ENCODE measurements at regions of chr1 and their contacts with region 1.

Region 1: DNA sequence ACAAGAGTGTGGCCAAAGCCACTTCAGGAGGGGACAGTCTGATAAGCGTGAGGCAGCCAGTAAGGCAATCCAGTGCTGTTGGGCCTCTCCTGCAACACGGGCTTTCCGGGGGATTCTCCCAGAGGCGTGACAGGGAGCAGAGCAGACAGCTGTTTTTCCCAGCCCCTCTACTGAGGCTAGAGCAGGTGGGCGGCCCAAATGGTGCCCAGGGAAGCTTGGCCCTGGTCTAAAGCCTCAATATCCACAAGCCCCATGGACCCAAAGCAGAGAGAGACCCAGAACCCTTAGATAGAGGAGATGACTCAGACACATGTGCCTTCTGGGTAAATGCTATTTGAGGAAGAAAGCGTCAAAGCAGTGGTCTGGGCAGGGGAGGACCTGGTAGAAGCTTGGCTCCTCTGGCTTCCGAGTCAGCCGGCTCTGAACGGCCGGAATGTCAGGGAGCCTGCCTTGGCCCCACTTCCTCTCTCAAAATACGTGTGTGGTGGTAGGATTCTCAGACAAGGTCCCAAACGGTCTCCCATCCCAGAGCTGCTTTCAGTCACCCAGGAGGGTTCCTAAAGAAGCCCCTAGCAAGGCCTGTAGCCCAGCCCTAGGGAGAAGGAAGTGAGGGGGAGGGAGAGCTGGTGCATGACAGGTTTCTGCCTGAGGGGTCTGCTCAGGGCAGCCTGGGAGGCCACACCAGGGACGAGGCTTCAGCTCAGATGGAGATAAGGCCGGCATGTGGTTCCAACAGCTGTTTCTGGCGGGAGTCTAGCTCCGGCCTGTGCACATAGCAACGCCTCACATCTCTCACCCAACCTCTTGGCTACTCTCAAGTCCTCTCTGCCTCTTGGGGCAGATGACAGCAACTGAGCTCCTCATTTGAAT is 28.8 kb downstream of the PIK3C2B start:
- DNase-seq: peak; percentile 44
- H3K4me3 ChIP-seq: no peak overlapping the region
- H3K27ac ChIP-seq: peak overlapping the region; percentile 2
- H3K4me1 ChIP-seq: peaks cover 66% of the 10 kb centered on the region
- H3K27me3 ChIP-seq: no peaks in the 10 kb centered on the region
- CTCF ChIP-seq: no peak
- POLR2A ChIP-seq: no peak

Region 2: GRCh38 chr1:204417231-204417997 is 48.4 kb before region 1 on chr1:
- CTCF ChIA-PET with region 1: no interaction called
- POLR2A ChIA-PET with region 1: no interaction called
- dilution Hi-C with region 1: no loop called
- intact Hi-C with region 1: loop called (anchors 1 kb)
- DNase-seq: peak; percentile 95
- H3K4me3 ChIP-seq: peak overlapping the region in 1 of 3 experiments; percentile 31
- H3K27ac ChIP-seq: peak overlapping the region; percentile 84
- H3K4me1 ChIP-seq: peaks cover 26% of the 10 kb centered on the region
- H3K27me3 ChIP-seq: no peaks in the 10 kb centered on the region
- CTCF ChIP-seq: no peak
- POLR2A ChIP-seq: no peak

Region 3: DNA sequence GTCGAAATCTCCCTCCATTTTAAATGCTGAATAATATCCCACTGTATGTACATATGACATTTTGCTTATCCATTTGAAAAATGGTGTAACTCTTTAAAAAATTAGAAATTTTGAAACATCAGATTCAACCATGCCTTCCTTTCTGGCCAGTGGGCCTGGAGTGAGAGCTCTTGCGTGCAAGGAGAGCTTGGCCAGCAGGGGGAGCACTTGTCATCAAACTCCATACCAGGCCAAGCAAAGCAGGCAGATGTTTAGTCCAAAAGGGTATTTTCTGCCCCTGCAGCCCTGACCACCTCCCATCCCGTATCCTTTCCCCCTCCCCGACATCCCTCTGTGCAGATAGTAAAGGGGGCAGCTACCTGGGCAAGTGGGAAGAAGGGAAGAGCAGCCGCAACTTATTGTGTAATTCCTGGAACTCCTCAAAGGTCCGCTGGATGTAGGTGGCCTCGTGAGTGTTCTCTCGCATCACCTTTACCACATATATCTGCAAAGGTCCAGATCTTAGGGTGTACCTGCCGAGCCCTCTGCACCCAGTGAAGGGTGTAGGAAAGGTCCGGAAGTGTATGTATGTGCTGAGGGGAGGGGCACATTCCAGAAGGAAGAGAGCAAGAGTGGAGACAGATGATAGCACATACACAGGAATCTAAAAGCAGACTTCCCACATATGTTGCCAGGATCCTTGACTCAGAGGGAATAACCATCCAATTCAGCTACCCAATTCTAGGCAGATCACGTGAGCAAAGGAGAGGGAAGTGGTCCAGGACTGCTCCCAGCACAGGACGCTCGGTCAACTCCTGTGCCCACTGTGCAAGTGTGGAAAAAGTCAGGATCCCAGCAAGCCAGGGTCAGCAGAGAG is 34.2 kb before region 1 on chr1:
- CTCF ChIA-PET with region 1: interaction called, 11 read pairs
- POLR2A ChIA-PET with region 1: no interaction called
- dilution Hi-C with region 1: no loop called
- intact Hi-C with region 1: no loop called
- DNase-seq: peak; percentile 75
- H3K4me3 ChIP-seq: no peak overlapping the region
- H3K27ac ChIP-seq: no peak overlapping the region
- H3K4me1 ChIP-seq: peaks cover 12% of the 10 kb centered on the region
- H3K27me3 ChIP-seq: no peaks in the 10 kb centered on the region
- CTCF ChIP-seq: peak; percentile 89 to 90
- POLR2A ChIP-seq: no peak

Region 4: GRCh38 chr1:204438628-204439027 is 27.2 kb before region 1 on chr1:
- CTCF ChIA-PET with region 1: interaction called, 94 read pairs
- POLR2A ChIA-PET with region 1: no interaction called
- dilution Hi-C with region 1: no loop called
- intact Hi-C with region 1: loop called (anchors 1 kb)
- DNase-seq: peak; percentile 62
- H3K4me3 ChIP-seq: no peak overlapping the region
- H3K27ac ChIP-seq: peak overlapping the region; percentile 37
- H3K4me1 ChIP-seq: peaks cover 42% of the 10 kb centered on the region
- H3K27me3 ChIP-seq: no peaks in the 10 kb centered on the region
- CTCF ChIP-seq: no peak
- POLR2A ChIP-seq: no peak

Region 5: DNA sequence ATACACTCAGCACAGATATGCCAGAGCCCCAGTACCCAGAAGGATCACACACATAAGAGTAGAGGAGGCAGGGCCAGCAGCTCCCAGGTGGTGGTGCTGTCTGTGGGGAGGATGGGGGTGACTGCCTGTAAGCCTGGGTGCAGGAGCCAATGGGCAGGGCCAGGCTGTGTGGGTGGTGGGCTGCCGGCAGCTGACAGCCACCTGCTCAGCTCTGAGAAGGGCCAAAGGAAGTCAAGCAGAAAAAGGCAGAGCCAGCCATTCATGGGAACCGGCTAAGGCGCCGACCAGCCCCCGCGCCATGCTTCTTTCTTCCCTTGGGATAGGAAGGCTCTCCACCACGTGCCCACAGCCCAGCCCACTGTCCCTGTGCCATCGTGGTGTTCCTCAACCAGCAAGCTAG is 14.7 kb after region 1 on chr1:
- CTCF ChIA-PET with region 1: interaction called, 19 read pairs
- POLR2A ChIA-PET with region 1: interaction called, 3 read pairs
- dilution Hi-C with region 1: no loop called
- intact Hi-C with region 1: loop called (anchors 1 kb)
- DNase-seq: no peak
- H3K4me3 ChIP-seq: no peak overlapping the region
- H3K27ac ChIP-seq: no peak overlapping the region
- H3K4me1 ChIP-seq: peaks cover 27% of the 10 kb centered on the region
- H3K27me3 ChIP-seq: no peaks in the 10 kb centered on the region
- CTCF ChIP-seq: no peak
- POLR2A ChIP-seq: no peak

Region 6: DNA sequence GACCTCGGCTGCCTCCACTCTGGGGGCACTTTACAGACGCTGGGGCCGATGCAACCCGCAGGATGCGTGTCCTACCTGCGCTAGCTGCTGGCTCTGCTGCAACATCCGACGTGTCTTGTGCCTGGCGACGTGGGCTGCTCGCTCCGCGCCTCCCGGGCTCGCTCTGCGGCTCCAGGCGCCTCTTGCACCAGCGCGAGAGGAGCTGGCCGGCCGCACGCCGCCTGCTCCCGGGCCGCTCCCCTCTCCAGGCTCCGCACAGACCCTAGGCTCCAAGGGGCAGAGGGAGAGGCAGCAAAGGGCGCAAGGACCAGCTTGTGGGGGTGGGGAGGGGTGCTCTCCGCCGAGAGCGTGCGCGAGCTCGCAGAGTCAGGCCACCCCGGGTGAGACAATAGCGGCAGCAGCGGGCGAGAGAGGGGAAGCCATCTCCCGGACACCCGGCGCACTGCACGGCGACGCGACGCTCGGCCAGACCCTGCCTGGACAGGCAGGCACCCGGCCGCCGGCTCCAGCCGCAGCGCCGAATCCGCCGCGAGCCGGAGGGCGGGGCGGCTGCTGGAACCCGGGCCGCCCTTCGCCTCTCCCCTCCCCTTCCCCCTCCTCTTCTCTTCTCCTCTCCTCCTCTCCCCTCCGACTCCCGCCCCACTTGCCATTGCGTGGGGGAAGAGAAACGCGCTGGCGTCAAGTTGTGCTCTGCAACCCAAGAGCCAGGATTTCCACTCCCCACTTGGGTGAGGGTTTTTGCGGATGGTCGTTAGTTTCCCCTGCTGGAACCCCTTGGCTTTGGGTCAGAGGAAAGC is 28.7 kb after region 1 on chr1 and contains the start of gene PIK3C2B:
- CTCF ChIA-PET with region 1: interaction called, 33 read pairs
- POLR2A ChIA-PET with region 1: no interaction called
- dilution Hi-C with region 1: no loop called
- intact Hi-C with region 1: loop called (anchors 1 kb)
- DNase-seq: peak; percentile 88
- H3K4me3 ChIP-seq: peak within 1 kb of the TSS; percentile 56 to 85 (median 64)
- H3K27ac ChIP-seq: peak within 1 kb of the TSS; percentile 63
- H3K4me1 ChIP-seq: peaks cover 18% of the 10 kb centered on the region
- H3K27me3 ChIP-seq: no peaks in the 10 kb centered on the region
- CTCF ChIP-seq: peak; percentile 49 to 64
- POLR2A ChIP-seq: peak; percentile 82
- total RNA-seq, gene PIK3C2B: 41.8 and 49.0 TPM in 2 replicates

Measured in endothelial cell of umbilical vein (primary cell).